ENCODE measurements at regions of chr1 and their contacts with region 1.

Region 1: DNA sequence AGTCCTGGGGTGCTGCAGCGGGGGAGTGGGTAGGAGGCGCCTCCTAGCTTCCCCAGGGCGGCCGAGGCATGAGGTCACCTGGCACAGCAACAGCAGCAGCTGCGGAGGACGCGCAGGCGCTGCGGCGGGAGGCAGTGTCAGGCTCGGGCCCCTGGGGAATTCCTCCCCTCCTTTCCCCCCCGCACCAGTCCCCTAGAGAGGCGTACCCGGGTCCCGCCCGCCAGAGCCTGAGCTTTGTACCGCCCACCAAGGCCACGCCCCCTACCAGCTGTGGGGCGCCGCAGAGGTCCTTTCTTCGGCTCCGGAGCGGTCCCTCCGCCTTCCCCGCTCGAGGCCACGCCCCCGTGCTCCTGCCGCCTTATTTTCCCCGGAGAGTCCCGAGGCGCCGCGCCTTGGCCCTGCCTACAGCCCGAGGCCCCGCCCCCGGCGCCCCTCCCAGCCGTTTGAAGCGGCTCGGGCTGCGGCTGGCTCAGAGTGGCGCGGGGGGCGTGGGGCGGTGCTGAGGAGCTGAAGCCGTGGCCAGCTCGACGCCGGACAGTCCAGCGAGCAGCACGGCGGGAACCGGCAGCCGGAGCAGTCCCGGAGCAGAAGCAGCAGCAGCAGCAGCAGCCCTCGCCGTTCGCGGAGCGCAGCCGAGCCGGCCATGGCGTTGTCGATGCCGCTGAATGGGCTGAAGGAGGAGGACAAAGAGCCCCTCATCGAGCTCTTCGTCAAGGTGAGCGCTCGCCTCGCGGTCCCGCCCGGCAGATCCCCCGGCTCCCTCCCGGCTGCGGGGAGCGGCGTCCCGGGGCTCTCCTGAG is at the start of gene CLIC4:
- DNase-seq: peak; percentile 100
- ATAC-seq: peak; percentile 93
- H3K4me3 Mint-ChIP-seq: peak within 1 kb of the TSS; percentile 90
- H3K27ac Mint-ChIP-seq: peak within 1 kb of the TSS; percentile 90
- H3K4me1 Mint-ChIP-seq: peaks cover 44% of the 10 kb centered on the region
- H3K27me3 Mint-ChIP-seq: no peaks in the 10 kb centered on the region
- total RNA-seq, gene CLIC4: 29.8 to 33.1 TPM

Region 2: DNA sequence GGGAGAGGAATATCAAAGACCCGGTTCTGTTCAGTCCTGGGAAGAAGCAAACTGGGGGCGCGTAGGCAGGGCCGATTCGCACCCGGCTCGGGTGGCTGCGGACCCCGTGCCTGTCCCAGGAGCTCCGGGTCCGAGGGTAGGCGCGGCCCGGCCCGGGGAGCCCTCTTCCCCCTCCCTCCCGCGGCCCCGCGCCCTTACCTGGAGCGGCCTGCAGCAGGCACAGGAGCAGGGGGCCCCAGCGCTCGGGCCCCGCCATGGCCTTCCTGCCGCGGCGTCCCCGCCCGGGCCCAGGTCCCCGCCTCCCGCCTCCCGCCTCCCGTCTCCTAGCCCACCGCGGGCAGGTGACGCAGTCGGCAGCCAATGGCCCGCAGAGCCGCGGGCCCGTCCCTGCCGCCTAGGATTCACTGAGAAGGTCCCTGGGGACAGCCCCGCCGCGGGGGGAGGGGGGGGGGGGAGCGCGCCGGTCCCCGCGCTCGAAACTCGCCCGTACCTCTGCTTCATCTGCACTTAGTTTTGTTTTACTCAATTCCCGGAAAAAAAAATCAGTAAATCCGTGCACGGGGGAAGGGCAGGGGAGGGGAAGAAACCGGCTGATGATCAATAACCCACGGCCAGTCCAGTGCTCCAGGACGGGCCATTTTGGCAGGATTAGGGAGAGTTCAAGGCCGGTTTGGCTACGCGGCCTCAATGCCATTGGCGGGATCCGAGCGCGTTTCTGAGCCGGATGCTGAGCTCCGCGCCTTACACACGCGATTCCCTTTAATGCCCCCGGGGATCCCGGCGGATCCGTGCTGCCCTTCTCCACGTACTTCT is 557.9 kb before region 1 on chr1 and contains the start of gene IFNLR1:
- CTCF ChIA-PET with region 1: no interaction called
- POLR2A ChIA-PET with region 1: no interaction called
- intact Hi-C with region 1: loop called in 1 of 2 experiments (anchors 5 kb)
- DNase-seq: peak; percentile 93
- ATAC-seq: peak; percentile 88
- H3K4me3 Mint-ChIP-seq: peak within 1 kb of the TSS; percentile 73
- H3K27ac Mint-ChIP-seq: peak within 1 kb of the TSS; percentile 71
- H3K4me1 Mint-ChIP-seq: peaks cover 47% of the 10 kb centered on the region
- H3K27me3 Mint-ChIP-seq: no peaks in the 10 kb centered on the region
- total RNA-seq, gene IFNLR1: 6.6 to 7.4 TPM

Region 3: GRCh38 chr1:24541711-24542346 is 203.3 kb before region 1 on chr1:
- CTCF ChIA-PET with region 1: no interaction called
- POLR2A ChIA-PET with region 1: interaction called, 4 read pairs
- intact Hi-C with region 1: loop called in 1 of 2 experiments (anchors 1 kb)
- DNase-seq: peak; percentile 68
- ATAC-seq: no peak
- H3K4me3 Mint-ChIP-seq: peak overlapping the region; percentile 48
- H3K27ac Mint-ChIP-seq: peak overlapping the region; percentile 93
- H3K4me1 Mint-ChIP-seq: peaks cover 69% of the 10 kb centered on the region
- H3K27me3 Mint-ChIP-seq: no peaks in the 10 kb centered on the region

Region 4: DNA sequence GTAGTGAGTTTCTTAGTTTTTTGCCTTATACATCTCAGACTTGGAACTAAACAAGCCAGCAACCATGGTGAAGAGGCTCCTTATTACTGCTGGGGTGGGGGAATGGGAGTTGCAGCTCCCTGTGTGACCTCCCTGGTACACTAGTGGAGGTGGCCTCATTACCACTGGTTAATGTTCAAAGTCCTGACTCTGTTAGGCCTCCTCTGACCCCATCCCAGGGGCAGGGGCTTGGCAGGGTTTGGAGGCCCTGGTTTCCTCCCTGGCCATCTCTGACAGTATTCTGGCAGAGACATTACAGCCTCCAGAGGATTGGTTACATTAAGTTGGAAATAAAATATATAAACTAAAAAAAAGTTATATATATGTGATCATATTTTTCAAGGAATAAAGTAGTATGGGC is 45.4 kb after region 1 on chr1:
- CTCF ChIA-PET with region 1: no interaction called
- POLR2A ChIA-PET with region 1: no interaction called
- intact Hi-C with region 1: no loop called
- DNase-seq: no peak
- ATAC-seq: no peak
- H3K4me3 Mint-ChIP-seq: no peak overlapping the region
- H3K27ac Mint-ChIP-seq: no peak overlapping the region
- H3K4me1 Mint-ChIP-seq: no peaks in the 10 kb centered on the region
- H3K27me3 Mint-ChIP-seq: no peaks in the 10 kb centered on the region

Region 5: GRCh38 chr1:24964811-24965570 is 219.9 kb after region 1 on chr1:
- CTCF ChIA-PET with region 1: no interaction called
- POLR2A ChIA-PET with region 1: no interaction called
- intact Hi-C with region 1: loop called in 1 of 2 experiments (anchors 2 kb)
- DNase-seq: peak; percentile 98
- ATAC-seq: peak; percentile 81
- H3K4me3 Mint-ChIP-seq: peak overlapping the region; percentile 94
- H3K27ac Mint-ChIP-seq: peak overlapping the region; percentile 94
- H3K4me1 Mint-ChIP-seq: peaks cover 72% of the 10 kb centered on the region
- H3K27me3 Mint-ChIP-seq: no peaks in the 10 kb centered on the region

Region 6: DNA sequence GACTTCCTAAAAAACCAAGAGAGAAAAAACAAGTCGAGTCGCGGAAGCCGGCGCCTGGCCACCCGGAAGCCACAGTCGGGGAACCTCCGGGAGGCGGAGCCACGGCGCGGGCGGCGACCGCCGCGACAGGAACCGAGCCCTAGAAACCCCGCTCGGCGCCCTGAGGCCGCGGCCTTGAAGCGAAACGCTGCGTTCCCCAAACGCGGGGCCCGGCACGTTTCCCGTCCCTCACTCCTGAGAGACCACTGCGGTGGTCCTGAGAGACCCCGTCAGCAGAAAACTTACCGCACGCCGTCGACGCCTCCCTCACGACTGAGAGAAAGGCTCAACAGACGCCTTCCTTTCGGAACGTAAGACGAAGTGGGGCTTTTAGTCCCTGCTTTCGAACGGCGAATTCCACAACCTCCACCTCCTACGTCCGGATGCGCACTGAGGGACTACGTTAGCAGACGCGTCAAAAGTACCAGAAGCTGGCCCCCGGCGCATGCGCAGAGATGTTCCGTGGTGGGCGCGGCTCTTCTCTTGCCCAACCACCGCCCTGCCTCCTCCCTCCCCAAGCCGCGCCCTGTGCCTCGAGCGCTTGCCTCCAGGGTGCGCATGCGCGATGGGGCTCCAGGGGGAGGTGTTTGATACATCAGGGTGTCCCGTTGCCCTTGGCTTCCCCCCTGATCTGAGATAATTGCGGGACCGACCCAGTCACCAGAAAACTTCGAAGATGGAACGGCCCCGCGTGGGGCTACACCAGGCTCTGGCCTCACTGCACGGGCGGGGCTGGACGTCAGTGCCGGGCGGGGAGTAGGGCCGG is 502.1 kb after region 1 on chr1 and contains the start of gene RSRP1:
- CTCF ChIA-PET with region 1: no interaction called
- POLR2A ChIA-PET with region 1: interaction called, 3 read pairs
- intact Hi-C with region 1: loop called in 1 of 2 experiments (anchors 2 kb)
- DNase-seq: peak; percentile 100
- ATAC-seq: peak; percentile 90
- H3K4me3 Mint-ChIP-seq: peak within 1 kb of the TSS; percentile 96
- H3K27ac Mint-ChIP-seq: peak within 1 kb of the TSS; percentile 99
- H3K4me1 Mint-ChIP-seq: peaks cover 40% of the 10 kb centered on the region
- H3K27me3 Mint-ChIP-seq: no peaks in the 10 kb centered on the region
- total RNA-seq, gene RSRP1: 86.8 to 120 TPM

Region 7: DNA sequence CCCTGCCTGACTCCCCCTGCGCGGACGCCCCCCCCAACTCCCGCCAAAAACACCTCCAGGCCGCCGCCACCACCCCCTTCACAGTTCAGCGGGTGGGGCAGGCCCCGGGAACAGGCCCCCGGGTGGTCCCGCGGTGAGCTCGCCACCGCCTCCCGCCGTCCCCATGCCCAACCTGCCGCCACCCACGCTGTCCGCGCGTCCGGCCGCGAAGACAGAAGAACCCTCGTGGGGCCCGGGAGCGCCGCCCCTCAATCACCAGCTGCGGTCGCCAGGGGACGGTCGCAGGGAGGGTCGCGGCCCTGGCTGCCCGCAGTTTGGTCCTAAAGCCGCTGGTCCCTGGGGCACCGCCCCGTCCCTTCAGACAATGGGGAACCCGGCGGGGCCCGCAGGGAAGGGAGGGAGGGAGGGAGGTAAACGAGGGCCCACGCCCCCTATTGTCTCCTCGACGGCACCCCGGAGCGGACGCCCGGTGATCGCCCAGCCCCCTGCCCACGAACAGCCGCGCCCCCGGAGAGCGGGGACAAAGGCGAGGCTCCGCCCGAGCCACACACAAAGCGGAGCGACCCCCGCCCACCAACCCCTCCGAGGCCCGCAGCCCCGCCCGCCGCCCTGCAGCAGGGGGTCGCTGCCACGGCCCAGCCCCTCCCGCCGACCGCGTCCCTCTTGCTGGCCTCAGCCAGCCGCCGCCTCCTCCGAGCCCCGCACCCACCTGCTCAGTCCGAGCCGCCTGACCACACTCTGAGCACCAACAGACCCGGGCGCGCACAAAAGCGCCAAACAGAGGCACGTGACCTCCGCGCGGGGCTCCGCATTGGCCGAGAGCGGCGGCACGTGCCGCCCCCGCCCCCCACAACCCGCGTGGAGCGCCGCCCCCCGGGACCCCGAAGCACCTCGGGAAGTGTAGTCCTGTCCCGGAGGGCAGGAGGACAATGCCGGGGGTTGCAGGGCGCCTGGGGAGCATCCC is 1160.9 kb after region 1 on chr1 and contains the start of gene STMN1:
- CTCF ChIA-PET with region 1: no interaction called
- POLR2A ChIA-PET with region 1: no interaction called
- intact Hi-C with region 1: loop called in 1 of 2 experiments (anchors 5 kb)
- DNase-seq: peak; percentile 96
- ATAC-seq: peak; percentile 81
- H3K4me3 Mint-ChIP-seq: peak within 1 kb of the TSS; percentile 84
- H3K27ac Mint-ChIP-seq: peak within 1 kb of the TSS; percentile 83
- H3K4me1 Mint-ChIP-seq: peaks cover 25% of the 10 kb centered on the region
- H3K27me3 Mint-ChIP-seq: no peaks in the 10 kb centered on the region
- total RNA-seq, gene STMN1: 557 to 771 TPM